ENCODE measurements at regions of chr7 and their contacts with region 1.

Region 1: GRCh38 chr7:130996841-130997231 is 262.8 kb upstream of the KLF14 start:
- DNase-seq: peak; percentile 81 to 98
- H3K4me3 ChIP-seq: peak overlapping the region; percentile 18; the same call in 1 of the 2 replicates
- H3K27ac ChIP-seq: peak overlapping the region; percentile 79
- H3K4me1 ChIP-seq: peaks cover 71% of the 10 kb centered on the region
- H3K27me3 ChIP-seq: no peaks in the 10 kb centered on the region
- CTCF ChIP-seq: no peak

Region 2: GRCh38 chr7:130822642-130823041 is 174.2 kb before region 1 on chr7:
- CTCF ChIA-PET with region 1: interaction called, 12 read pairs
- POLR2A ChIA-PET with region 1: no interaction called
- intact Hi-C with region 1: no loop called
- DNase-seq: no peak
- H3K4me3 ChIP-seq: no peak overlapping the region
- H3K27ac ChIP-seq: no peak overlapping the region
- H3K4me1 ChIP-seq: no peaks in the 10 kb centered on the region
- H3K27me3 ChIP-seq: no peaks in the 10 kb centered on the region
- CTCF ChIP-seq: no peak

Region 3: GRCh38 chr7:130912862-130913631 is 83.8 kb before region 1 on chr7:
- CTCF ChIA-PET with region 1: no interaction called
- POLR2A ChIA-PET with region 1: interaction called, 5 read pairs
- intact Hi-C with region 1: loop called (anchors 1 kb)
- DNase-seq: peak; percentile 89 to 97
- H3K4me3 ChIP-seq: peak overlapping the region; percentile 96
- H3K27ac ChIP-seq: peak overlapping the region; percentile 99
- H3K4me1 ChIP-seq: peaks cover 58% of the 10 kb centered on the region
- H3K27me3 ChIP-seq: no peaks in the 10 kb centered on the region
- CTCF ChIP-seq: no peak

Region 4: GRCh38 chr7:130939321-130940095 is 57.3 kb before region 1 on chr7:
- CTCF ChIA-PET with region 1: no interaction called
- POLR2A ChIA-PET with region 1: interaction called, 19 read pairs
- intact Hi-C with region 1: no loop called
- DNase-seq: no peak
- H3K4me3 ChIP-seq: no peak overlapping the region
- H3K27ac ChIP-seq: no peak overlapping the region
- H3K4me1 ChIP-seq: no peaks in the 10 kb centered on the region
- H3K27me3 ChIP-seq: no peaks in the 10 kb centered on the region
- CTCF ChIP-seq: no peak

Region 5: DNA sequence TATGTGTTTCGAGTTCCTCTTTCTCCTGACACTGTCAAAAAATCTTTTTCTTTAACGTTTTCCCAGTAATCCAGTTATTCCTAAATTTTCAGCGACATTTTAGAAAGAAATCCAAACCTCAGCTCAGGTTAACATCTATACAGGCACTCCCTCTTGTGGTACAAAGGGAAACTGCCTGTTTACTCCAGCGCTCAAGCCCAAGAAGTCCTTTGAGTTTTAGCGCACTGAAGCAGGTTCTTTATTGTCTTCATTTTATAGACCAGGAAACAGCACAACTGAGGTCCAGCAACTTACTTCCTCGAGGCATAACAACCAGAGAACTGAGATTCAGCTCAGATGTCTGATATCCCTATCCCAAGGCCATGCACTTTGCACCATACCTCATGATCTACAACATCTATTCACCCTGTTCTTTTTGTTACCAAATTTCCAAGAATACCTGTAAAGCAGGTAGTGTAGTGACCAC is 43.7 kb after region 1 on chr7:
- CTCF ChIA-PET with region 1: interaction called, 21 read pairs
- POLR2A ChIA-PET with region 1: no interaction called
- intact Hi-C with region 1: no loop called
- DNase-seq: peak; percentile 51 to 77
- H3K4me3 ChIP-seq: no peak overlapping the region
- H3K27ac ChIP-seq: no peak overlapping the region; the same call in 1 of the 2 replicates
- H3K4me1 ChIP-seq: no peaks in the 10 kb centered on the region; the same call in none of the 2 replicates
- H3K27me3 ChIP-seq: no peaks in the 10 kb centered on the region
- CTCF ChIP-seq: peak; percentile 96

Measured in PC-9 (cell line).